Activated CD8-positive, alpha-beta T cell treated with anti-CD3 and anti-CD28 coated beads, Interleukin-2, amount 10 ng/mL, durations not matched to agents 7 days and 5 days (primary cell): ENCODE measurements at regions of chr21 and their contacts with region 1.

Region 1: DNA sequence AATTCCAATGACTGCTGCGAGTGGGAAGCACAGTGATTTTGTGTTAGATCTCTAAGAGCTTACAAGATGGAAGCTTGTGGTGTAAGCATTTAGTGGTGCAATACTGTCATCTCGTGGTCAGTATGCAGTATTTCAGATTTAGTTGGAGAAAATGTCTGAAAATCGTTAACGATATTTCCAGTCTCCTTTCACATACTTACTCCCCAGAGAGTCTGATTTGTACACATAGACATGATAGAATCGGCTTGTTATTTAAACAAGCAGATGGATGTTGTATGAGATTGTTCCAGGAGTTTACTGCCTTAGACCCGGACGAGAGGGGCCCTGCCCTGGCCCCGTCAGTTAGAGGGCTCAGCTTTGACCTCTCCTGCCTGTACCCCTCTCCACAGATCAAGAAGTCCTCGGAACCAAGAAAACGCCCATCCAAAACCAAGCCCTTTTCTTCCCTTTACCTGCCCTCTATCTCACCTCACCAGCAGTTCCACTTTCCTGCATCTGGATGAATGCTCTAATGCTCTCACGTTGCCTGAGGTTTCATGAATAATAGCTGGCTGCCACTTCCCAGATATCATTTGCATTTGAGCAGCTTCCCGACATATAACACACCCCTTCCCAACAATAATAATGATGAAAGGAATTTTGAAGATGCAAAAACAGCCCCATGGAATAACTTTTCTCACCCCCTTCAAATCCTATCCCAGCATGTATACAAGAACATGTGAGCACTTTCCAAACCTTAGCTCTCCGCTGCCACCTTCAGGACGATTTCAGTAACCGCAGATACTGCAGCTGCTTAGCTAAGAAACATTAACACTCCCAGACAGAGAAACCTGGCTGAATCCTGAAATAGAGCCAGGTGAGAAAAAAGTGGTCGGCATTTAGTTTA is 247.3 kb downstream of the LTN1 start:
- DNase-seq: peak; percentile 82
- ATAC-seq: peak; percentile 86
- H3K4me3 Mint-ChIP-seq: no peak overlapping the region
- H3K27ac Mint-ChIP-seq: no peak overlapping the region
- H3K4me1 Mint-ChIP-seq: no peaks in the 10 kb centered on the region
- H3K27me3 Mint-ChIP-seq: no peaks in the 10 kb centered on the region

Region 2: DNA sequence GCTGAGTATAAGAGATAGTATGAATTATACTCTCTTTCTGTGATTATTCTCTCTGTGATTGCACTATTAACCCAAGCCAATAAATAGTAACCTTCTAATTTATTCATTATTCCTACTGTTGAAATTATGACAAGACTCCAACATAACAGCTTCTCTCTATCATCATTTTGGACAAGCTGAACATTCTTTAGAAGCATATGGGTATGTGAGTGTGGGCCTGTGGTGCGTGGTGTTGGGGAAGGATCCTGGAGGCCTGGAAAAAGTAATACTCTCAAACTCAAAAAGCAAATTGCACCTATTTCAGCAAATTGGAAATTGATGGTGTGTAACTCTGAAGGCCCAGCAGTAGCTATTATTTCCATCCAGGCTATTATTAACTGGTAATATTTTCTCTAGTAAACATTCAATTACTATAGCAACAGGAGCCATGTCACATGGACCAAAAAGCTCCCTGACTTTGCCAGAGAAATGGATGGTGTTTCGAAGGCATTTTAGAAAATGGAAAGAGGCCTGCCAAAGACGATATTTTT is 255.5 kb before region 1 on chr21:
- CTCF ChIA-PET with region 1: interaction called, 11 read pairs
- POLR2A ChIA-PET with region 1: interaction called, 3 read pairs
- DNase-seq: no peak
- ATAC-seq: no peak
- H3K4me3 Mint-ChIP-seq: no peak overlapping the region
- H3K27ac Mint-ChIP-seq: no peak overlapping the region
- H3K4me1 Mint-ChIP-seq: no peaks in the 10 kb centered on the region
- H3K27me3 Mint-ChIP-seq: no peaks in the 10 kb centered on the region

Region 3: GRCh38 chr21:28516991-28517592 is 228.3 kb before region 1 on chr21:
- CTCF ChIA-PET with region 1: interaction called, 141 read pairs
- POLR2A ChIA-PET with region 1: no interaction called
- DNase-seq: peak; percentile 74
- ATAC-seq: peak; percentile 96
- H3K4me3 Mint-ChIP-seq: no peak overlapping the region
- H3K27ac Mint-ChIP-seq: no peak overlapping the region
- H3K4me1 Mint-ChIP-seq: no peaks in the 10 kb centered on the region
- H3K27me3 Mint-ChIP-seq: peaks cover 5% of the 10 kb centered on the region

Region 4: GRCh38 chr21:28731700-28732321 is 13.6 kb before region 1 on chr21:
- CTCF ChIA-PET with region 1: interaction called, 51 read pairs
- POLR2A ChIA-PET with region 1: no interaction called
- DNase-seq: no peak
- ATAC-seq: no peak
- H3K4me3 Mint-ChIP-seq: no peak overlapping the region
- H3K27ac Mint-ChIP-seq: no peak overlapping the region
- H3K4me1 Mint-ChIP-seq: no peaks in the 10 kb centered on the region
- H3K27me3 Mint-ChIP-seq: no peaks in the 10 kb centered on the region

Region 5: DNA sequence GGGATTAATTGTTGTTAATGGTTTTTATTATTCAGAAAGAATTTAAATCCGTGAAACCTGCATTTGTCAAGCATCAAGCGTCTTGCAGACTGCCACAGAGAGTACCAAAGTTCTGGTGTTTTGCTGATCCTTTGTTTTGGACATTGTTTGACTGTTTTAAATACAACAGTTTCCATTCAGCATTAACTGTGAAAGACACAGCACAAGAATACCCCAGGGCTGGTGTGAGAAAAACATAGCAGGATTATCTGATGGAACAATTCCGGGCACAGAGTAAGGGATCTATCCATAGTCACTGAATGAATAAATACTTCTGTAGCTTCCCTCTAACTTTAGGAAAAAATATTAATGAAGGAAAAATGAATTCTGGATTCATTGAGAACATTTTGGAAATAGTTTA is 45.0 kb after region 1 on chr21:
- CTCF ChIA-PET with region 1: no interaction called
- POLR2A ChIA-PET with region 1: no interaction called
- DNase-seq: no peak
- ATAC-seq: no peak
- H3K4me3 Mint-ChIP-seq: no peak overlapping the region
- H3K27ac Mint-ChIP-seq: no peak overlapping the region
- H3K4me1 Mint-ChIP-seq: no peaks in the 10 kb centered on the region
- H3K27me3 Mint-ChIP-seq: no peaks in the 10 kb centered on the region

Region 6: GRCh38 chr21:28884976-28885852 is 139.8 kb after region 1 on chr21:
- CTCF ChIA-PET with region 1: interaction called, 22 read pairs
- POLR2A ChIA-PET with region 1: no interaction called
- DNase-seq: peak; percentile 96
- ATAC-seq: peak; percentile 98
- H3K4me3 Mint-ChIP-seq: peak overlapping the region; percentile 94
- H3K27ac Mint-ChIP-seq: peak overlapping the region; percentile 100
- H3K4me1 Mint-ChIP-seq: peaks cover 19% of the 10 kb centered on the region
- H3K27me3 Mint-ChIP-seq: peaks cover 13% of the 10 kb centered on the region

Region 7: DNA sequence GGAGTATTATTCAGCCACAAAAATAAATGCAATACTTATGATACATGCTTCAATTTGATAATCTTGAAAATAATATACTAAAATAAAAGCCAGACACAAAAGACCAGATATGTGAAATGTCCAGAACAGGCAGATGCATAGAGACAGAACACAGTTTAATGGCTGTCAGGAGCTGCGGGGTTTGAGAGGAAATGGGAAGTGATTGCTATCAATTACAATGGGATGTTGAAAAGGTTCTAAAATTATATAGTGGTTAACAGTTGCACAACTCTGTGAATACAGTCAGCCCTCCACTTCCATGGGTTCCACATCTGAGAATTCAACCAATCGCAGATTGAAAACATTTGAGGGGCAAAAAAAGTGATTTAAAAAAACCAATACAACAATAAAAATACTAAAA is 193.4 kb after region 1 on chr21:
- CTCF ChIA-PET with region 1: interaction called, 65 read pairs
- POLR2A ChIA-PET with region 1: no interaction called
- DNase-seq: no peak
- ATAC-seq: no peak
- H3K4me3 Mint-ChIP-seq: no peak overlapping the region
- H3K27ac Mint-ChIP-seq: no peak overlapping the region
- H3K4me1 Mint-ChIP-seq: peaks cover 4% of the 10 kb centered on the region
- H3K27me3 Mint-ChIP-seq: no peaks in the 10 kb centered on the region

Region 8: GRCh38 chr21:29449306-29449950 is 704.1 kb after region 1 on chr21:
- CTCF ChIA-PET with region 1: no interaction called
- POLR2A ChIA-PET with region 1: no interaction called
- DNase-seq: peak; percentile 56
- ATAC-seq: peak; percentile 94
- H3K4me3 Mint-ChIP-seq: peak overlapping the region; percentile 63
- H3K27ac Mint-ChIP-seq: peak overlapping the region; percentile 97
- H3K4me1 Mint-ChIP-seq: peaks cover 21% of the 10 kb centered on the region
- H3K27me3 Mint-ChIP-seq: no peaks in the 10 kb centered on the region